ENCODE measurements at regions of chr3 and their contacts with region 1.

Region 1: DNA sequence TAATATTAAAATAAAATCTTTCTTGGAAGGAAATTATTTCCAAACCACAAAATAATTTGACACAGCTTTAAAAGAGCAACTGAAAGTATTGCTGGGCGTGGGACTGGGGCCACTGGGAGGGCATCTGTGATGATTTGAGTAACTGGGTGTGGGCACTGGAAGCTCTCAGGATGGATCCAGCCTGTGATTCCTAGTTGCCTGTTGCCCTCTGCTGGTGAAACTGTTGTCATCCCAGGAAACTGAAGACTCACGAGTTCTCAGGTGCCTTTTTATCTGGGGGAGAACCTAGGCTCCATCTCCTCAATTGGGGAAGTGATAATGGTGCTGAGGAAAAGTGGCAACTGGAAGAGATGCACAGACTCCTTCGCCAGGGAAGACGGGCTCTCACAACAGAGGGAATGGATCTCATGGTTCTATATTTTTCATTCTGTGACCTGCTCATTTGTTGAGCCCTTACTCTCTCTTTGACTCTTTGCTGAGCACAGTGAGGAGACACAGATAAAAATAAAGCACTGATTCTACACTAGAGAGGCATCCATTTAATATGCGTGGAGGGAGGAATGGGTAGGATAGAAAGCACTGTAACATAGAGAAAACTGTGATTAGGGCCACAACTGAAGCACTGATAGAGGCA is 61.6 kb downstream of the TPRG1 start:
- DNase-seq: peak; percentile 54 to 74
- H3K4me3 ChIP-seq: no peak overlapping the region
- H3K27ac ChIP-seq: no peak overlapping the region
- H3K4me1 ChIP-seq: 0 out of 2 replicates have a peak, but pooled peaks cover 7% of the 10 kb centered on the region
- H3K27me3 ChIP-seq: no peaks in the 10 kb centered on the region
- CTCF ChIP-seq: peak; percentile 89

Region 2: DNA sequence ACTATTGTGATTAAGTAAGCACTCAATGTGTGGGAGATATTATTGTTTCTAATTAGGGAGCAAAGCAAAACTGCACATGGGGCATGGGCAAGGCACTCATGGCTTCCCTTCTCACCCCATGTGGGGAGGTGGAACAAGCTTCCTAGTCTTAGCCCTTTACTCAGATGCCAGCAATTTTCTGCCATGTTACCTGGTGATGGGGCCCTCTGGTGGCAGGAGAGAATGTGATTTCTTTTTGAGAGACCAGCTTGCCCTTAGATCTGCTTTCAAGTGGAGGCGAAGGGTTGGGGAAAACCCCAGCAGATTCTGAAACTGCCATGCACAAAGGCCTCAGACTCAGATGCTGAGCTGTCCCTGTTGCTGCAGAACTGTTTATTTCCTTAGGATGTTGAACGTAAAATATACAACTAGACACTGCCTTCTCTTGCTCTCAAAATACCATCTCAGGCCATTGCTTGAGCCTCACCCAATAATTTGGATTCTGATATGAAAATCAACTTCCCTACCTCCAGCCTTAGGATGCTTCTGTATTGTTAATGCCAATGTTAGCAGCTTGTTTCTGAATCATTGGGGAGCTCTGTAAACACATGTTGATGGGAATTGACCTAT is 191.8 kb before region 1 on chr3:
- CTCF ChIA-PET with region 1: no interaction called
- POLR2A ChIA-PET with region 1: no interaction called
- intact Hi-C with region 1: loop called (anchors 5 kb)
- DNase-seq: peak in 1 of 2 experiments; percentile 42
- H3K4me3 ChIP-seq: no peak overlapping the region
- H3K27ac ChIP-seq: no peak overlapping the region
- H3K4me1 ChIP-seq: no peaks in the 10 kb centered on the region
- H3K27me3 ChIP-seq: no peaks in the 10 kb centered on the region
- CTCF ChIP-seq: peak; percentile 71

Region 3: GRCh38 chr3:189148081-189148507 is 85.2 kb before region 1 on chr3:
- CTCF ChIA-PET with region 1: interaction called, 9 read pairs
- POLR2A ChIA-PET with region 1: no interaction called
- intact Hi-C with region 1: loop called (anchors 2 kb)
- DNase-seq: peak; percentile 59
- H3K4me3 ChIP-seq: no peak overlapping the region
- H3K27ac ChIP-seq: no peak overlapping the region
- H3K4me1 ChIP-seq: peaks cover 7% of the 10 kb centered on the region
- H3K27me3 ChIP-seq: no peaks in the 10 kb centered on the region
- CTCF ChIP-seq: peak; percentile 97

Region 4: DNA sequence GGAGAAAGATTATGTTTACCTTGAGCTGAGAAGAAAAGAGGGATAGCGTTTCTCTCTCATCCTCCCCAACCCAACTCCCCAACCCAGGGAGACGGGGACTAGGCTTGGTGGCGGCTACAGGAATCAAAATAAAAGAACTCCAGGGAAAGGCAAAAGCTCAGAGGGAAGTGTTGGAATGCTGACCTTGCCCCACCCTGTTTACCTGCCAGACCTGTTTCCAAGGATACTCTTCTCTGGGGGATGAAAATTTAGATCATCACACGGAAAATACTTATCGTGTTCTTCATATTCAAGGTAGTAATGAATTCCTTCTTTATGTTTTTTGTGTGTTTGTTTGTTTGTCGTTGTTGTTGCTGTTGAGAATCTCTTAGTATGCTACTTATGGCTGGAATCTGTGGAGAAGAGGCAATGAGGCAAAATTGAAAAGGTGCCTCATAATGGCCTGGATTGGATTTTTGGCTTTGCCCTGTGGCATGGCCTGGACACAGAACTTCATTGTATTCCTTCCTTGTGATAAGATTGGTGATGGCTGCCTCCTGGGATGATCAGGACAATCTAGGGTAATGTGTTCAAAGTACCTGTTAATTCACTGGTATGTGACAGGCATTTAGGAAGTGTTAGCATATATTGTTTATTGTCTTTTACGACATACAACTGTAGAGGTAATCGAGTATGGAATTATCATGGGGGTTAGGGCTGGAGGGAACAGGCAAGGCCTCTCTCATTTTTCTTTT is 72.6 kb before region 1 on chr3:
- CTCF ChIA-PET with region 1: interaction called, 8 read pairs
- POLR2A ChIA-PET with region 1: no interaction called
- intact Hi-C with region 1: loop called (anchors 5 kb)
- DNase-seq: peak; percentile 48 to 50
- H3K4me3 ChIP-seq: no peak overlapping the region
- H3K27ac ChIP-seq: no peak overlapping the region
- H3K4me1 ChIP-seq: peaks cover 11% of the 10 kb centered on the region
- H3K27me3 ChIP-seq: no peaks in the 10 kb centered on the region
- CTCF ChIP-seq: no peak